ENCODE measurements at regions of chr6 and their contacts with region 1.

Region 1: GRCh38 chr6:32868257-32868788 is 14.3 kb downstream of the PSMB9 start:
- DNase-seq: peak; percentile 92
- H3K4me3 Mint-ChIP-seq: no peak overlapping the region
- H3K27ac Mint-ChIP-seq: no peak overlapping the region
- H3K4me1 Mint-ChIP-seq: peaks cover 39% of the 10 kb centered on the region
- H3K27me3 Mint-ChIP-seq: peaks cover 14% of the 10 kb centered on the region

Region 2: DNA sequence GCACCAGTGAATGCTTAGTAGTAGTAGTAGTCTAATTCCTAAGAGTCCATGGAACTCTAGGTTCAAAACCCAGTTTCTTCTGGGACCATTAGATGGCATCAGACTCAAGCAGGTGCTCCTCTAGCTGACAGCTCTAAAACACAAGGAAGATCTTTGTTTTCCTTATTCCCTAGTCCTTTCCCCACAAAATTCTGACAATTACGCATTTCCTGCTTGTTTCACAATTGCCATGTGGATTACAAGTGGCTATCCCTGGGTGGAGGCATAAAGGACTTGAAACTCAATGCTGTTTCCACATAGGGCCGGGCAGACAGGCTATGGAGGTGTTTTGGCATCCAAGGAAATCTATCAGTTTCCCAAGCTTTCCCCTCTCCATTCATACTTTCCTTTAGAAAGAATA is 42.4 kb before region 1 on chr6:
- CTCF ChIA-PET with region 1: interaction called, 11 read pairs
- POLR2A ChIA-PET with region 1: interaction called, 3 read pairs
- DNase-seq: no peak
- H3K4me3 Mint-ChIP-seq: no peak overlapping the region
- H3K27ac Mint-ChIP-seq: no peak overlapping the region
- H3K4me1 Mint-ChIP-seq: peaks cover 29% of the 10 kb centered on the region
- H3K27me3 Mint-ChIP-seq: no peaks in the 10 kb centered on the region

Region 3: DNA sequence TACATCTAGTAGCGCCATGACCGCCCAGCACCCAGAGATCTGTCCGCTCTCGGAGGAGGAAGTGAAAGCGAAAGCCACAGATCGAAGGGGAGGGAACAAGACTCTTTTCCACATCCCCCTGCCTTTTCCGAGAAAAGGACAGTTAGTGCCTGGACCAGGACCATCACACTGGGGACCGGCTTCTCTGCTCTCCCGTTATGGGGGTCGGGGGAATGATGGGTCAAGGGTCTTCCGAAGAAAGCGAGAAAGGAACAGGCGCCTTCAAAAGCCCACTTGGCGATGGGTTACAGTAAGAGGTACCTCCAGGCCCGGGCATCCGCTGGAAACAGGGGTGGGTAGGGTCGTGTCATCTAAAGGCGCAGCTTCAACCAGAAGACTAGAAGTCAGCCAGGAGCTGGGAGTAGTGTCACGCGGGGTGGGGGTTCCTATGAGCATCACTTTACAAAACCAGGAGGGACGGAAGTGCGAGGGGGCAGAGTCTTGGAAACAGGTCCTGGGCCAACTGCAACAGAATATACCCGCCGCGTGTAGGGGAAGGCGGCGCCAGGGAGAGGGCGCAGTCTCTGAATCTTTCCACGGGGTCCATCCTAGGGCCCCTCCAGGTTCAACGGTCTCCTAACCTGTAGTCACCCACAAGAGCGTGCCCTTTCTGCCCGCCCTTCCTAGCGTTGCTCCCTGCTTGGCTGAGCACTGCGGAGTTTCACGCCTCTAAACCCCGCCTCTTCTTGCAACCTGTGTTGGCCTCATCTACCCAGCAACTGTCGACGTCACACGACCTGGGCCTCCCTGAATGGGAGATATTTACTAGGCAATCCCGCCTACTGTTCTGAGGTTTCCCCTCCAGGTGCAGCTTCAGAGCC is 24.1 kb before region 1 on chr6 and contains the start of gene PSMB8:
- CTCF ChIA-PET with region 1: interaction called, 97 read pairs
- POLR2A ChIA-PET with region 1: interaction called, 19 read pairs
- DNase-seq: peak; percentile 99
- H3K4me3 Mint-ChIP-seq: peak within 1 kb of the TSS; percentile 99
- H3K27ac Mint-ChIP-seq: peak within 1 kb of the TSS; percentile 100
- H3K4me1 Mint-ChIP-seq: peaks cover 75% of the 10 kb centered on the region
- H3K27me3 Mint-ChIP-seq: no peaks in the 10 kb centered on the region
- total RNA-seq, gene PSMB8: 307 to 379 TPM

Region 4: DNA sequence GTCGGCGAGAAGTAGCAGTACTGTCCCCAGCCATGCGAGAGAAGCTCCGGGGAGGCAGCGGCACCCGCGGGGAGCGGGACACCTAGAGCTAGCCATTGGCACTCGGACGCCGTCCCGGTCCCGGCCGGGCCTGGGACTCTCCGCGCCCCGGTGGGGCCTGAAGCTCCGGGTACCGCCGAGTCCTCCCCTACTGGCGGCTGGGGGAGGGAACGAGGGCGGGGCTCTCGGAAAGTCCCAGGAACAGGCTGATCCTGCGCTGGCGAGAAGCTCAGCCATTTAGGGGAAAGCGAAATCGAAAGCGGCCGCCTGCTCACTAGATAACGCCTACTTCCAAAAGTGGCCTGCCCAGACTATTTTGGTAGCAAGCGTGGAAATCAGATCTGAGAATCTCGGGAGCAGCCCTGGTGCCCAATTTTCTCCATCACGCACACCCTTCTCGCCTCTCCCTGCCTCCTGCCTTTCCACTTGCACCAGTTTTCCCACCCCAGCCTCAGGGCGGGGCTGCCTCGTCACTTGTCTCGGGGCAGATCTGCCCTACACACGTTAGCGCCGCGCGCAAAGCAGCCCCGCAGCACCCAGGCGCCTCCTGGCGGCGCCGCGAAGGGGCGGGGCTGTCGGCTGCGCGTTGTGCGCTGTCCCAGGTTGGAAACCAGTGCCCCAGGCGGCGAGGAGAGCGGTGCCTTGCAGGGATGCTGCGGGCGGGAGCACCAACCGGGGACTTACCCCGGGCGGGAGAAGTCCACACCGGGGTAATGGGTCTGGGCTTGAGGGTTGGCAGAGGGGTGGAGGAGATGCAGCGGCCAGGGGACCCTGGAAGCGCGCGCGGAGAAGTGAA is 14.6 kb before region 1 on chr6 and contains the starts of genes PSMB9 and TAP1:
- CTCF ChIA-PET with region 1: interaction called, 61 read pairs
- POLR2A ChIA-PET with region 1: interaction called, 3 read pairs
- DNase-seq: peak; percentile 97
- H3K4me3 Mint-ChIP-seq: peak within 1 kb of the TSS; percentile 98
- H3K27ac Mint-ChIP-seq: peak within 1 kb of the TSS; percentile 100
- H3K4me1 Mint-ChIP-seq: peaks cover 62% of the 10 kb centered on the region
- H3K27me3 Mint-ChIP-seq: no peaks in the 10 kb centered on the region
- total RNA-seq, gene PSMB9: 329 to 391 TPM
- total RNA-seq, gene TAP1: 396 to 441 TPM